HCT116 (cell line): ENCODE measurements at regions of chr10 and their contacts with region 1.

Region 1: DNA sequence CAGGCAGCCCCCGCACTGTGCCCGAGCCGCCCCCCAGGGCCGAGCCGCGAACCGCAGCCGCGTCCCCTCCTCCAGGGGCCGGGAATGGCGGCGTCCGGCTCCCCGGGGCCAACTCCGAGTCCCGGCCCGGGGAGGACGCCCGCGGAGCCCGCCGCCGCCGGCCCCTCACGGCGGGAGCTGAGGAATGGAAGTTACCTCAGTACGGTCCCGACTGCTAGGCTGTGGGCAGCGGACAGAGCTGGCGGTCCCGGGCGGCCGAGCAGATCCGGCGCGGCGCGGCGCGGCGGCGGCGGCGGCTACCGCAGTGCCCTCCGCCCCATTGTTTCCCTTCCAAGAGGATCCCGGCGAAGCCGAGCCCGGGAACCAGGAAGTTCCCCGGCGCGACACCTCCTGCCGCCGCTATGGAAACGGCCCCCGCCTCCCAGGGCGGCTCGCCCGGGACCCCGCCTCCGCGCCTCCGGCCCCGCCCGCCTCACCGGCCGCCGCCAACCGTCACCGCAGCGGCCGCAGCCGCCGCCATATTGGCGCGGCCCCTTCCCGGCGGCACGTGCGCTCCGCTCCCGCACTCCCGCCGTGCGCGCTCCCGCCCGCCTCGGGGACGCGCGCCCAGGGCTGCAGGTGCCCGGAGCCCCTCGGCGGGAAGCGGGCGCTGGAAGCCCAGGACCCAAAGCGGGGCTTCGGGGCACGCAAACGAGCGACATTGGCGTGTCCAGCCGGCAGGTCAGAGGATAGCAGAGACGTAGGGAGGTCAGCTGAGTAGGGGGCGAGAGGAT is at the start of gene USP6NL:
- DNase-seq: peak; percentile 41
- ATAC-seq: peak; percentile 87
- H3K4me3 ChIP-seq: peak within 1 kb of the TSS; percentile 80 to 91
- H3K27ac ChIP-seq: peak within 1 kb of the TSS; percentile 81
- H3K4me1 ChIP-seq: peaks cover 24 to 47% of the 10 kb centered on the region in 2 experiments
- H3K27me3 ChIP-seq: no peaks in the 10 kb centered on the region
- CTCF ChIP-seq: no peak
- POLR2A ChIP-seq: no peak
- RAD21 ChIP-seq: no peak
- total RNA-seq, gene USP6NL: 24.6 TPM

Region 2: DNA sequence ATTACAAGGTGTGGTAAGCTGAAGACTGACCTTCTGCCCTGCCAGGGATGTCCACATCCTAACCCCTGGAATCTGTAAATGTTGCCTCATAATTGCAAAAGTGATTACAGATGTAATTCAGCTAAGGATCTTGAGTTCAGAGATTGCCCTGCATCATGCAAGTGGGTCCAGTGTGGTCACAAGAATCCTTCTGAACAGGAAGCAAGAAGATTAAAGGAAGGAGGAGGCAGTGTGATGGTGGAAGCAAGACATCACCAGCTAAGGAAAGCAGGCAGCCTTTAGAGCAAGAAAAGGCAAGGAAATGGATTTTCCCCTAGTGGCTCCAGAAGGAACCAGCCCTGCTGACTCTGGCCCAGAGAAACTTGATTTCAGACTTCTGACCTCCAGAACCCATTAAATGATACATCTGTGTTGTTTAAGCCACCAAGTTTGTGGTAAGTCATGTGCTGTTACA is 78.1 kb before region 1 on chr10:
- CTCF ChIA-PET with region 1: no interaction called
- POLR2A ChIA-PET with region 1: no interaction called
- RAD21 ChIA-PET with region 1: no interaction called
- intact Hi-C with region 1: loop called (anchors 2 kb)
- DNase-seq: no peak
- ATAC-seq: peak; percentile 88
- H3K4me3 ChIP-seq: no peak overlapping the region
- H3K27ac ChIP-seq: no peak overlapping the region
- H3K4me1 ChIP-seq: peaks cover 13 to 14% of the 10 kb centered on the region in 2 experiments
- H3K27me3 ChIP-seq: no peaks in the 10 kb centered on the region
- CTCF ChIP-seq: peak in 2 of 3 experiments; percentile 55 to 60; a peak in 4 of 6 replicates
- POLR2A ChIP-seq: no peak
- RAD21 ChIP-seq: no peak

Region 3: GRCh38 chr10:11684717-11685645 is 73.5 kb after region 1 on chr10:
- CTCF ChIA-PET with region 1: no interaction called
- POLR2A ChIA-PET with region 1: interaction called, 4 read pairs
- RAD21 ChIA-PET with region 1: no interaction called
- intact Hi-C with region 1: loop called (anchors 1 kb)
- DNase-seq: peak; percentile 96
- ATAC-seq: peak; percentile 79
- H3K4me3 ChIP-seq: peak overlapping the region; percentile 39 to 55
- H3K27ac ChIP-seq: peak overlapping the region; percentile 82
- H3K4me1 ChIP-seq: peaks cover 49 to 78% of the 10 kb centered on the region in 2 experiments
- H3K27me3 ChIP-seq: no peaks in the 10 kb centered on the region
- CTCF ChIP-seq: no peak
- POLR2A ChIP-seq: no peak
- RAD21 ChIP-seq: 0 out of 2 replicates have a peak, but pooled peaks have one; percentile 26